ENCODE measurements at regions of chr18 and their contacts with region 1.

Region 1: GRCh38 chr18:11654736-11655605 is 34.1 kb upstream of the GNAL start:
- DNase-seq: no peak
- H3K4me3 ChIP-seq: no peak overlapping the region
- H3K27ac ChIP-seq: no peak overlapping the region
- H3K27me3 ChIP-seq: peaks cover 4% of the 10 kb centered on the region
- CTCF ChIP-seq: peak; percentile 74

Region 2: GRCh38 chr18:11665587-11665986 is 10.6 kb after region 1 on chr18:
- CTCF ChIA-PET with region 1: interaction called, 10 read pairs
- POLR2A ChIA-PET with region 1: no interaction called
- DNase-seq: no peak
- H3K4me3 ChIP-seq: no peak overlapping the region
- H3K27ac ChIP-seq: no peak overlapping the region
- H3K27me3 ChIP-seq: no peaks in the 10 kb centered on the region
- CTCF ChIP-seq: no peak

Region 3: GRCh38 chr18:12236934-12237832 is 582.2 kb after region 1 on chr18:
- CTCF ChIA-PET with region 1: interaction called, 23 read pairs
- POLR2A ChIA-PET with region 1: no interaction called
- DNase-seq: no peak
- H3K4me3 ChIP-seq: no peak overlapping the region
- H3K27ac ChIP-seq: peak overlapping the region; percentile 11
- H3K27me3 ChIP-seq: peaks cover 4% of the 10 kb centered on the region
- CTCF ChIP-seq: peak; percentile 84